ENCODE measurements at regions of chr9 and their contacts with region 1.

Region 1: DNA sequence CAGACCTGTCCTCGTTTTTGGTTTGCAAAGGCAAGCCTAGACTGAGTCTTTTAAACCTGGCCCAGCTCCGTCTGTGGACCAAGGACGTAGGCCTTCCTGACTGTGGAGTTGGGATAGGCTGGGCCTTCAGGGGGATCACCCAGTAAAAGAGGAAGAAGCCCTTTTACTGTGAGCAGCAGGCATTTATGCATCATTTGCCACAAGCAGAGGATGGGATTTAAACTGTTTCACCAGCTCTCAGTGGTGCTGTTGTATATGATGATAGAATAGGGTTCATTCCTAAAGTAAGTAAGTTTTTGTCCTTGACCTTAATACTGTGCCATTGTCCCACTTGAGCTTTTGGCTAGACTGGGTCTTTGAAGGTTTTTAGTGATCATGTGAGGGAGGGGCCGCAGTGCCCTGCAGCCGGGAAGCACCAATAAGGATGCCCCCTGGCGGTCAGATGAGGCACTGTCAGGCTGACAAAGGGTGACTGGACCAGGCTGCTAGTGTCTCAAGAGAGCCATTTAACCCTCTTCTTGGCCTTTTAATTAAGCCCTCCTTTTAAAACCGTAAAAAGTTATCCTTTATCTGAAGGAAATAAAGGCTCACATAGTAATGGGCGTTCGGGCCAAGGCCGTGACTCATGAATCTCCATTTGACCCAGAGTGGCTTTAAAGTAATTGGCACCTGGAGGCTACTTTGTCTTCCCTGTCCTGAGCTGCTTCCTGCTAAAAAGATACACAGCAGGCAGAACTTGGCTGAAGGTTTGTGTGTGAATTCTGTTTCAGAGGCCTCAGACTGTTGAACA is 74.0 kb downstream of the UBAP1 start:
- DNase-seq: no peak
- ATAC-seq: peak; percentile 94
- H3K4me3 ChIP-seq: no peak overlapping the region
- H3K27ac ChIP-seq: no peak overlapping the region
- H3K4me1 ChIP-seq: no peaks in the 10 kb centered on the region
- H3K27me3 ChIP-seq: no peaks in the 10 kb centered on the region
- CTCF ChIP-seq: peak; percentile 78 to 96 (median 95)
- EP300 ChIP-seq: no peak
- POLR2A ChIP-seq: peak; percentile 15; the same call in 1 of the 2 replicates
- RAD21 ChIP-seq: peak; percentile 60

Region 2: DNA sequence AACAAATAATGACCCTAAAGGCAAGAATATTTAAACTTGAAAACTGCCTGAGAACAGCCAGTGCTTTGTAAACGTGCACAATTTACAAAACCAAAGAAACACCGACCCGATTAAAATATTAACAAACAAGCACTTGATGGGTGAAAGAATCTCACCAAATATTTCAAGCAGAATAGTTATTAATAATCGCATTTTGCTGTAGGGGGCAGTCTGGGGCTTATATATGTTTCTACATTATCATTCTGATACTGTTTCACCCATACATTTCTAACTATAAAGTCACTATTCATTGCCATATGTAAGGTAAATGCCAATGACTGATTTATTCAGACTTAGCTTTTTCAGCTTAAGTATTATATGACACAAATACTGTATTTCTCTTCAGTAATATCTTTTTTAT is 241.9 kb before region 1 on chr9:
- CTCF ChIA-PET with region 1: interaction called, 11 read pairs
- POLR2A ChIA-PET with region 1: no interaction called
- RAD21 ChIA-PET with region 1: interaction called, 4 read pairs
- SMC1A ChIA-PET with region 1: interaction called, 5 read pairs
- in situ Hi-C with region 1: no loop called
- intact Hi-C with region 1: no loop called
- DNase-seq: no peak
- ATAC-seq: peak; percentile 53; the same call in 2 of the 3 replicates
- H3K4me3 ChIP-seq: no peak overlapping the region
- H3K27ac ChIP-seq: no peak overlapping the region
- H3K4me1 ChIP-seq: no peaks in the 10 kb centered on the region
- H3K27me3 ChIP-seq: no peaks in the 10 kb centered on the region
- CTCF ChIP-seq: peak in 2 of 3 experiments; percentile 34 to 47; a peak in 2 of 6 replicates
- EP300 ChIP-seq: no peak
- POLR2A ChIP-seq: no peak
- RAD21 ChIP-seq: peak; percentile 47

Region 3: GRCh38 chr9:34163458-34163857 is 89.4 kb before region 1 on chr9:
- CTCF ChIA-PET with region 1: interaction called, 12 read pairs
- POLR2A ChIA-PET with region 1: no interaction called
- RAD21 ChIA-PET with region 1: no interaction called
- SMC1A ChIA-PET with region 1: no interaction called
- in situ Hi-C with region 1: no loop called
- intact Hi-C with region 1: no loop called
- DNase-seq: no peak
- ATAC-seq: no peak
- H3K4me3 ChIP-seq: no peak overlapping the region
- H3K27ac ChIP-seq: no peak overlapping the region
- H3K4me1 ChIP-seq: no peaks in the 10 kb centered on the region
- H3K27me3 ChIP-seq: no peaks in the 10 kb centered on the region
- CTCF ChIP-seq: no peak
- EP300 ChIP-seq: no peak
- POLR2A ChIP-seq: no peak
- RAD21 ChIP-seq: no peak

Region 4: GRCh38 chr9:34222451-34222850 is 30.4 kb before region 1 on chr9:
- CTCF ChIA-PET with region 1: interaction called, 10 read pairs
- POLR2A ChIA-PET with region 1: no interaction called
- RAD21 ChIA-PET with region 1: interaction called, 4 read pairs
- SMC1A ChIA-PET with region 1: no interaction called
- in situ Hi-C with region 1: no loop called
- intact Hi-C with region 1: no loop called
- DNase-seq: no peak
- ATAC-seq: no peak
- H3K4me3 ChIP-seq: no peak overlapping the region
- H3K27ac ChIP-seq: no peak overlapping the region
- H3K4me1 ChIP-seq: no peaks in the 10 kb centered on the region
- H3K27me3 ChIP-seq: no peaks in the 10 kb centered on the region
- CTCF ChIP-seq: no peak
- EP300 ChIP-seq: no peak
- POLR2A ChIP-seq: no peak
- RAD21 ChIP-seq: no peak

Region 5: GRCh38 chr9:34262939-34263338 is 10.1 kb after region 1 on chr9:
- CTCF ChIA-PET with region 1: interaction called, 19 read pairs
- POLR2A ChIA-PET with region 1: no interaction called
- RAD21 ChIA-PET with region 1: no interaction called
- SMC1A ChIA-PET with region 1: interaction called, 3 read pairs
- in situ Hi-C with region 1: no loop called
- intact Hi-C with region 1: no loop called
- DNase-seq: no peak
- ATAC-seq: no peak
- H3K4me3 ChIP-seq: no peak overlapping the region
- H3K27ac ChIP-seq: no peak overlapping the region
- H3K4me1 ChIP-seq: no peaks in the 10 kb centered on the region
- H3K27me3 ChIP-seq: no peaks in the 10 kb centered on the region
- CTCF ChIP-seq: no peak
- EP300 ChIP-seq: no peak
- POLR2A ChIP-seq: no peak
- RAD21 ChIP-seq: no peak

Region 6: DNA sequence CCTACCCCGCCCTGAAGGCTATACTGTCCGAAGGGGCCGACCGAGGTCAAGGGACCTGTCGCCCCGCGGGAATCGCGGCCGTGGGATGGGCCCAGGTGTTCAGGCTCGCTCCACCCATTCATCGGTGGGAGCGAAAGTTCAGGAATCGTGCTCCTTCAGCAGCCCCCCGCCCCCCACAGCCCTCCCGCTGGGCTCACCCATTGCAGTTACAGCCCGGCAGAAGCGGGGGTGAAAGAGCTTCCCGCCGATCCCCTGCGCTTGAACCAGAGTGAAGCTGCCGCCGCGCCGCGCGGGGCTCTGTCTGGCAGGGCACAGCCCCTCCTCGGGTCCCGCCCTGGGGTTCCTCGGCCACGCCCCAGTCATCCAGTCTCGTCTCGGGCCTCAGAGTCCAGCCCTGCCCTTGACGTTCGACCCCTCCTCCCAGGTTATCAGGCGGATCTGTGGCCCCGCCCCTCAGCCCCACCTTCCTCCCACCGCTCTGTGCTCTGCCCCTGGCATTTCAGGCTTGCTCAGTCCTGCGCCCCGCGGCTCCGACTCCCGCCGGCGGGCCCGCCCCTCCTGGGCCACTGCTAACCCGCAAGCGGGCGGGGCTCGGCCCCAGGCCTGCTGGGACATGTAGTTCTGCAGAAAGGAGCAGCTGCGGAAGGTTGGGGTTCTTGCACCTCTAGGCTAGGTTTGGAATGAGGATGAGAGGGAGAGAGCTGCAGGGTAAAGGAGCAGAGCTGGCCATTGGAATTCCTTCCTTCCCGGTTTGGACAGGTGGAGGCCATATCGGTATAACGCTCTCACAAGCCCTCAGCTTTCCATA is 123.9 kb after region 1 on chr9 and contains the start of gene MYORG:
- CTCF ChIA-PET with region 1: interaction called, 5 read pairs
- POLR2A ChIA-PET with region 1: no interaction called
- RAD21 ChIA-PET with region 1: no interaction called
- SMC1A ChIA-PET with region 1: interaction called, 4 read pairs
- in situ Hi-C with region 1: no loop called
- intact Hi-C with region 1: loop called (anchors 5 kb)
- DNase-seq: peak; percentile 82
- ATAC-seq: peak; percentile 88
- H3K4me3 ChIP-seq: peak within 1 kb of the TSS; percentile 68
- H3K27ac ChIP-seq: no peak within 1 kb of the TSS
- H3K4me1 ChIP-seq: peaks cover 21% of the 10 kb centered on the region
- H3K27me3 ChIP-seq: peaks cover 5 to 9% of the 10 kb centered on the region in 2 experiments; a peak in 3 of 4 replicates
- CTCF ChIP-seq: no peak
- EP300 ChIP-seq: no peak
- POLR2A ChIP-seq: peak; percentile 65
- RAD21 ChIP-seq: no peak
- polyA plus RNA-seq, gene MYORG: 0.06 to 0.07 TPM

Measured in GM12878 (cell line).